GM10248 (cell line): ENCODE measurements at regions of chr15 and their contacts with region 1.

Region 1: DNA sequence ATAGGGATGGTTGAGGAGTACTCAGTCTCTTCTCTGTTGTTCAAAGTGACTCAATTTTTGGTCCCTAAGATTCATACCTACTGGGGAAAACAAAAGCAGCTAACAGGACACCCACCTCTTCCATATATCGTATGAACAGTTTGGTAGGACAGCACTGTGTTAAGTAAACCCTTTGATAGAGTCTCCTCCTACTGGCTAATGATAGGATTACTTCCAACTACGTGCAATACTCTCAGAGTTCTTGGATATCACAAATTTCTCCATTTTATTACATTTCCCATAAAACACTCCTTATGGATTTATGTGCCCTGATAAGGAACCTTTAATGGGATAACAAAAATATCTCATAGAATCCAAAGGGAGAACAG is 200.2 kb upstream of the GOLGA6L4 start:
- DNase-seq: peak; percentile 36
- CTCF ChIP-seq: peak; percentile 62

Region 2: DNA sequence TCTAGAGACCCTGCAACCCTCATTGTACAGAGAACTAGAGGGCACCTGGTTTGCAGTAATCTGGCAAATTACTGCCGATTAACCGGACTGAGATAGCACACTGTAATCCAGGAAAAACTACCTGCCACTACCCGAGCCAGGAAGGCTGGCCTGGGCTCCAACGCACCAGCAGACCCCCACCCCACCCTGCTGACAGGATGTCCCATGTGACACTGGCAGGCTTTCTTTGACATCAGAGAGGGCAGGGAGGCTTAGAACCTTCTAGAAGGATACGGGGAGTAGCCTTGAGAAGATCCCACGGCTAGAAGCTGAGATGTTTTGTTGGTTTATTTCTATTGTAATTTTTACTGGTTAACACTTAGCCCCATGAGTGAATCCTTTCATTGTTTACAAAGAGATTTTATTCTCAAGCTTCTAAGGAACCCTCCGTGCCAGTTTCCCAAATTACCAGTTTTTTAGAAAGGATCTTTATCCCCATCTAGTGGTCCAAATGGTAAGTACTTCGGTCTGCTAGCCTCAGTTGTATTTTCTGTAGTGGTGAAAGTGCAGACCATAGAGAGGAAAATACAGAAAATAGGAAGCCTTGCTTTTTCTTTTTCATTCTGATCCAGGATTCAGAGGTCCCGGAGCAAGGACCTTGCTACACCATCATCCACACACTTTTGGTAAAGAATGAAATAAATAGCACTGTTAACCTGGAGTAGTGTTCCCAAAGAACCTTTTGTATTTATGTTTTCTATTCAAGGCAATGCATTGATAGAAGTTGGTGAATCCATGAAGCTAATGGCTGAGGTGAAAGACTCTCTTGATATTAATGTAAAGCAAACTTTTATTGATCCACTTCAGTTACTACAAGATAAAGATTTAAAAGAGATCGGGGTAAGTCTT is 463.3 kb before region 1 on chr15:
- CTCF ChIA-PET with region 1: interaction called, 25 read pairs
- POLR2A ChIA-PET with region 1: no interaction called
- DNase-seq: peak; percentile 34
- CTCF ChIP-seq: peak; percentile 32

Region 3: DNA sequence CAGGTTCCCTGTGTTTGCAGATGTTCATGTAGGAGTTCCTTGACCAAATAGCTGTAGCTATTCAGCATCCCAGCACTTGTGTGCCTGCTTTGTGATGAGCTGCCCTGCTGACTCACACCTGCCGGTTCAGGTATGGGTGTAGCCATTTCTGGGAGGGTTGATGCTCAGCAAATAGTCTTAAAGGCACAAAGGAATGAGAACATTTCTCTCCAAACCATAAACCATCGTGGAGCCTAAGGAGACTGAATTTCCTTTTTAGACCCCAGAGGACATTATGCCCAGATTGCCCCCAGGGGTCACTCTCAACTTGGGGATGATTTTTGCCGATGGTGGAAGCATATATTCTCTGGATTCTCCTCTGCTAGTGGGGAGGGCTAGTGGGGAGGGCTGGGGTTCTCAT is 300.9 kb before region 1 on chr15:
- CTCF ChIA-PET with region 1: interaction called, 41 read pairs
- POLR2A ChIA-PET with region 1: no interaction called
- DNase-seq: no peak
- CTCF ChIP-seq: peak; percentile 55

Region 4: GRCh38 chr15:84006421-84006820 is 29.0 kb before region 1 on chr15:
- CTCF ChIA-PET with region 1: interaction called, 14 read pairs
- POLR2A ChIA-PET with region 1: no interaction called
- DNase-seq: no peak
- CTCF ChIP-seq: no peak

Region 5: GRCh38 chr15:84016371-84016770 is 19.0 kb before region 1 on chr15:
- CTCF ChIA-PET with region 1: interaction called, 15 read pairs
- POLR2A ChIA-PET with region 1: no interaction called
- DNase-seq: no peak
- CTCF ChIP-seq: no peak

Region 6: GRCh38 chr15:84023636-84024035 is 11.7 kb before region 1 on chr15:
- CTCF ChIA-PET with region 1: interaction called, 42 read pairs
- POLR2A ChIA-PET with region 1: no interaction called
- DNase-seq: peak; percentile 36
- CTCF ChIP-seq: peak; percentile 46